GM12878 (cell line): ENCODE measurements at regions of chr11 and their contacts with region 1.

Region 1: GRCh38 chr11:32594272-32594671 is 10.6 kb downstream of the EIF3M start:
- DNase-seq: no peak
- ATAC-seq: peak; percentile 80
- H3K4me3 ChIP-seq: no peak overlapping the region
- H3K27ac ChIP-seq: no peak overlapping the region; the same call in 1 of the 2 replicates
- H3K4me1 ChIP-seq: no peaks in the 10 kb centered on the region
- H3K27me3 ChIP-seq: no peaks in the 10 kb centered on the region
- CTCF ChIP-seq: no peak
- EP300 ChIP-seq: no peak
- POLR2A ChIP-seq: no peak
- RAD21 ChIP-seq: no peak

Region 2: GRCh38 chr11:32606220-32606619 is 11.9 kb after region 1 on chr11:
- CTCF ChIA-PET with region 1: no interaction called
- POLR2A ChIA-PET with region 1: interaction called, 3 read pairs
- RAD21 ChIA-PET with region 1: no interaction called
- SMC1A ChIA-PET with region 1: interaction called, 10 read pairs
- in situ Hi-C with region 1: no loop called
- intact Hi-C with region 1: no loop called
- DNase-seq: no peak
- ATAC-seq: no peak
- H3K4me3 ChIP-seq: no peak overlapping the region
- H3K27ac ChIP-seq: no peak overlapping the region
- H3K4me1 ChIP-seq: no peaks in the 10 kb centered on the region
- H3K27me3 ChIP-seq: no peaks in the 10 kb centered on the region
- CTCF ChIP-seq: no peak
- EP300 ChIP-seq: no peak
- POLR2A ChIP-seq: no peak
- RAD21 ChIP-seq: no peak